Activated CD4-positive, alpha-beta memory T cell treated with anti-CD3 and anti-CD28 coated beads for 36 hours (primary cell): ENCODE measurements at regions of chr1 and their contacts with region 1.

Region 1: DNA sequence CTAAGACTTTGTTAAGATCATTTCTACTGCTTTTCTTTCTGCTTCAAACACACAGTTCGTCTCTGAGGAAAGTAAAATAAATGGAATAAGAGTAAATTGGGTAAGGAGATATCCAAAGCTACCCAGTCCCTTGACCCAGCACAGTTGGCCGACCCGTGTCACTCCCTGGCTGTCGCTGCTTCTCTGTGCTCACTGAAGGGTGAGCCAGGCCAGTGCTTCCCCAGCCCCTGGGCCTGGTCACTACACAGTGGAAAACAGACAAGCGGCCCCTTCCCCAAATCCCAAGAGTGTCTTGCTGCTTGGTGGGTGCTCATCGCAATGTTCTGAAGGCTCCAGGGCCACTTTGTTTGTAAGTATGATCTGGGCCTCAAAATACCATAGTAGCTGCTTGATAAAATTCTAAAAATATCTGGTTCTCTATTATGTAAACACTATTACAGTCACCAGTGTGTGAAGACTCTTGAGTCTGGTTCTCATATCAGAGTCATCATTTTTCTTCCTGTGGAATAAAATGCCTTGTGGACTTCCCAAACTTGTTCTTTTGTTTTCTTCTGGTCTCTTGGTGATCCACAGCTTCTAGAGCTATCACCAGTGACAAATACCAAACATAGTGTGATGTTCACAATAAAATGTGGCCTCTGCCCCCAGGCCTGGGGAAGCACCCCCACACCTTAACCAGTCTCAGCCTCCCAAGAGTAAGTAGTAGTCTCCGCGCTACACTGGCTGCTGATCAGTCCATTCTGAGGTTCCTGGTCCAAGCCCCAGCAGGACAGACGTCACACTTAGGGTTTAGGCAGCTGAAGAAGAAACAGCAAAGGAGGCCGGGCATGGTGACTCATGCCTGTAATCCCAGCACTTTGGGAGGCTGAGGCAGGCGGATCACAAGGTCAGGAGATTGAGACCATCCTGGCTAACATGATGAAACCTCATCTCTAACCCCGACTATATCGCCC is 106.2 kb downstream of the DHRS3 start:
- DNase-seq: no peak
- H3K4me3 Mint-ChIP-seq: peak overlapping the region; percentile 85
- H3K27ac Mint-ChIP-seq: peak overlapping the region; percentile 100
- H3K4me1 Mint-ChIP-seq: peaks cover 47% of the 10 kb centered on the region
- H3K27me3 Mint-ChIP-seq: no peaks in the 10 kb centered on the region

Region 2: GRCh38 chr1:12296623-12297022 is 215.2 kb before region 1 on chr1:
- CTCF ChIA-PET with region 1: no interaction called
- POLR2A ChIA-PET with region 1: interaction called, 3 read pairs
- intact Hi-C with region 1: loop called (anchors 5 kb)
- DNase-seq: no peak
- H3K4me3 Mint-ChIP-seq: no peak overlapping the region
- H3K27ac Mint-ChIP-seq: no peak overlapping the region
- H3K4me1 Mint-ChIP-seq: peaks cover 24% of the 10 kb centered on the region
- H3K27me3 Mint-ChIP-seq: no peaks in the 10 kb centered on the region

Region 3: GRCh38 chr1:12407050-12407961 is 104.5 kb before region 1 on chr1:
- CTCF ChIA-PET with region 1: interaction called, 13 read pairs
- POLR2A ChIA-PET with region 1: no interaction called
- intact Hi-C with region 1: no loop called
- DNase-seq: peak; percentile 21
- H3K4me3 Mint-ChIP-seq: no peak overlapping the region
- H3K27ac Mint-ChIP-seq: no peak overlapping the region
- H3K4me1 Mint-ChIP-seq: peaks cover 20% of the 10 kb centered on the region
- H3K27me3 Mint-ChIP-seq: no peaks in the 10 kb centered on the region

Region 4: DNA sequence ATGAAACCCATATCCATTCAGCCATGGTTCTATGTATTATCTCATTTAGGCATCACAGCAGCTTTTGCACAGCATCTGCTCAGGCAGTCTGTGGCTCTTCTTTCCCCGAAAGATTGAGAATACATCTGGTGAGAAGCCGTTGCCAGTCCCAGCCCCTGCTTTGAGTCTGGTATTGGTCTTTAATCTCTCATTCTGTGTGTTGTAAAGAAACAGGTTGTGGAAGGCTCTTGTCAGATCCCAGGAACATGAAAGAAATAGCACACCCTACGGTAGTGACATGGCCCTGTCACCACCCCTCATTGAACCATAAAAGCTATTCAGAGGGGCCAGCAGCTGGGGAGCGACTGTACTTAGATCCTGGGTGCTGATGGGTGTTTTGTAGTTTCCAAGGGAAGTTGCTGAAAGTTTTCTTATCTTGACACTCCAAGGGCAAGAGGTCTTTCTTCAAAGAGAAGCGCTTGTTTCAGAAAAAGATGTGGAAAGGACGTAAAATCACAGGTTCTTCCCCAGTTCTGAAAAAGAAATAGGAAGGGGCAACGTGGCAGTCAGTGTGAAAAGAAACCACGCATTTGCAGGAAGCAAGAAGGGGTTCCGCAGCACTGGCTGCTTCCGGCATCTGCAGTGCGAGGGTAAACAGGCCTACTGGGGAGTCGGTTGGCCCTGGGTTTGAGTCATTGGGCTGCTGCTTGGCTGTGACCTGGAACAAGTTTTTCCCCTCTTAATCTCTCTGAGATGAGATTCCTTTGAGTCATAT is 38.8 kb before region 1 on chr1:
- CTCF ChIA-PET with region 1: interaction called, 3 read pairs
- POLR2A ChIA-PET with region 1: interaction called, 8 read pairs
- intact Hi-C with region 1: loop called (anchors 1 kb)
- DNase-seq: peak; percentile 91
- H3K4me3 Mint-ChIP-seq: peak overlapping the region; percentile 62
- H3K27ac Mint-ChIP-seq: peak overlapping the region; percentile 95
- H3K4me1 Mint-ChIP-seq: peaks cover 87% of the 10 kb centered on the region
- H3K27me3 Mint-ChIP-seq: no peaks in the 10 kb centered on the region

Region 5: GRCh38 chr1:12501661-12502060 is 10.1 kb before region 1 on chr1:
- CTCF ChIA-PET with region 1: interaction called, 3 read pairs
- POLR2A ChIA-PET with region 1: interaction called, 17 read pairs
- intact Hi-C with region 1: loop called (anchors 1 kb)
- DNase-seq: peak; percentile 25
- H3K4me3 Mint-ChIP-seq: no peak overlapping the region
- H3K27ac Mint-ChIP-seq: peak overlapping the region; percentile 87
- H3K4me1 Mint-ChIP-seq: peaks cover 36% of the 10 kb centered on the region
- H3K27me3 Mint-ChIP-seq: no peaks in the 10 kb centered on the region

Region 6: DNA sequence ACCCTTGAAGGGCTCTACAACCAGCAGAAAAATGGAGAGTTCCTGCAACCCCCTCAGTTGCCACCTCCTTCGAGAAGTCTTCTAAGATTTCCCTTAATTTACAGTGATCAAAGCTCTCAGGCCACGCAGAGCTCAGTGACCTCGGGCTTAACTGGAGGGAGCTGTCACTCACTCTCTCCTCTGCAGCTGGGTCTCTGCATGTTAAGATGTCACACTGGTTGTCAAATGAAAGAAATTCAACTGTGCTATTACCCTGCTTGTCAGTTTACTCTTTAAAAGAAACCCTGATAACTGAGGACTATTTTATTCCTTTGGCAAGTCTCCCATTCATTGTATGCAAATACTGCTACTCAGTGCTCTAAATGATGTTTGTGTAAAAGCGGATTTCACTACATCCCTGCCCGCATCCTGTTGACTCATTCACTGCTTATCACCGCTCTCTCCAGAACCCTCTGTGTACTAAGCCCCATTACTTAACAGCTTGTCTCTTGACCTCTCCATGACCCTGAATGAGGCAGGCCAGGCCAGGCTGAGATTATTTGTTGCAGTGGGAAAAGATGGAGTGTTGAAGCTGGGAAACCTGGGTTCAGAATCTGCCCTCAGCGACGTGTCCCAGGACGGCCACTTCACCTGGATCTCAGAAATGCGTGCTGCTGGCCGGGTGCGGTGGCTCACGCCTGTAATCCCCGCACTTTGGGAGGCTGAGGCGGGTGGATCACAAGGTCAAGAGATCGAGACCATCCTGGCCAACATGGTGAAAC is 92.5 kb after region 1 on chr1:
- CTCF ChIA-PET with region 1: interaction called, 3 read pairs
- POLR2A ChIA-PET with region 1: interaction called, 5 read pairs
- intact Hi-C with region 1: loop called (anchors 5 kb)
- DNase-seq: peak; percentile 86
- H3K4me3 Mint-ChIP-seq: peak overlapping the region; percentile 39
- H3K27ac Mint-ChIP-seq: peak overlapping the region; percentile 66
- H3K4me1 Mint-ChIP-seq: peaks cover 58% of the 10 kb centered on the region
- H3K27me3 Mint-ChIP-seq: no peaks in the 10 kb centered on the region

Region 7: DNA sequence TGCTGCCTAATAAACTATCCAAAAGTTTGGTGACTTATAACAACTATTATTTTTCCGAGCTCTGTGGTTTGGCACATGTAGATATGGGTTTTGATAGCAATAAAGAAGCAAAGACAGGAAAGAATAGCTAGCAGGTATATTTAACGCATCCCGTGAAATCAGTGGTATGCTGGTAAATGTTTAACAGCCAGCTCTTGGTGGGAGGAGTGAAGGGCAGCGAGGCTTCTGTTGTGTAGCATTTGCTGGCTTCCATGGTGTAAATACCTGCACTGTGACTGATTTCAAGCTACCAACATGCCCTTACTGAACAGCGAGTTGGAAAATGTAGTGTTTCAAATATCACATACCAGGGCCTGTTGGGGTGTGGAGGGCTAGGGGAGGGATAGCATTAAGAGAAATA is 1479.1 kb after region 1 on chr1:
- CTCF ChIA-PET with region 1: no interaction called
- POLR2A ChIA-PET with region 1: no interaction called
- intact Hi-C with region 1: no loop called
- DNase-seq: no peak
- H3K4me3 Mint-ChIP-seq: no peak overlapping the region
- H3K27ac Mint-ChIP-seq: no peak overlapping the region
- H3K4me1 Mint-ChIP-seq: no peaks in the 10 kb centered on the region
- H3K27me3 Mint-ChIP-seq: peaks cover 16% of the 10 kb centered on the region